GM12878 (cell line): ENCODE measurements at regions of chr14 and their contacts with region 1.

Region 1: DNA sequence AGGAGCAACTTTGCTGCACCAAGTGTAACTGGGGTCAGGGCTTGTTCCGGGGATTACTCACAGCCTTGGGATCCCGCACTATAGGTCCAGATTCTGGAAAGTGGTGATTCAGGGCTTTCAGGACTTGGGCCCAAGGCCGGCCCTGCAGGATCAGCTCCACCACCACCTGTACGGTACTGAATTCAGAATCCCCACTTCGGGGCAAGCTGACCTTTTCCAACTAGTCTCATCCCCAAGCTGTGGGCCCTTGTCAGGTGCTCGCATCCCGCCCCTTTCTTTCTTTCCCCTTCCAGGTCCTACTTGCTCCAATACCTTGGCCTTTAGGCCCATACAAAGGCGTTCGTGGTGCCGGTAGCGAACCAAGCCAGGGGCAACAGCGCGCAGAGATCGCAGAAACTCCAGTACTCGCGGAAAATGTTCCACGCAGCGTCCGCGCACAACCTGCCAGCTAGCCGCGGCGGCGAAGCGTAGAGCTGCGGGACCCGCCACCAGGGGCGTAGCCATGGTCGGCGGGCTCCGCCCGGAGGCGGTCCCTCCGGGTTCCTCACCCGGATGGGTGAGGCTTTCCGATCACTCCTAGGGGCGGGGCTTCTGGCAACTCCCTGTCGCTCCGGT is 487 bp downstream of the TINF2 start:
- DNase-seq: no peak
- ATAC-seq: peak; percentile 90
- H3K4me3 ChIP-seq: peak overlapping the region; percentile 80
- H3K27ac ChIP-seq: peak overlapping the region; percentile 99
- H3K4me1 ChIP-seq: peaks cover 16% of the 10 kb centered on the region
- H3K27me3 ChIP-seq: no peaks in the 10 kb centered on the region
- CTCF ChIP-seq: peak; percentile 17 to 52 (median 19); a peak in 3 of 6 replicates
- EP300 ChIP-seq: no peak
- POLR2A ChIP-seq: no peak
- RAD21 ChIP-seq: no peak

Region 2: GRCh38 chr14:24114536-24115450 is 127.1 kb before region 1 on chr14 and contains the starts of genes DCAF11 and NRL:
- CTCF ChIA-PET with region 1: interaction called, 3 read pairs
- POLR2A ChIA-PET with region 1: interaction called, 11 read pairs
- RAD21 ChIA-PET with region 1: interaction called, 9 read pairs
- SMC1A ChIA-PET with region 1: interaction called, 8 read pairs
- in situ Hi-C with region 1: no loop called
- intact Hi-C with region 1: no loop called
- DNase-seq: peak; percentile 99
- ATAC-seq: peak; percentile 92
- H3K4me3 ChIP-seq: peak within 1 kb of the TSS; percentile 96
- H3K27ac ChIP-seq: peak within 1 kb of the TSS; percentile 94
- H3K4me1 ChIP-seq: peaks cover 5% of the 10 kb centered on the region
- H3K27me3 ChIP-seq: no peaks in the 10 kb centered on the region
- CTCF ChIP-seq: no peak
- EP300 ChIP-seq: no peak
- POLR2A ChIP-seq: peak; percentile 91
- RAD21 ChIP-seq: no peak
- polyA plus RNA-seq, gene DCAF11: 13.4 to 16.4 TPM
- polyA plus RNA-seq, gene NRL: 0.11 to 0.13 TPM

Region 3: GRCh38 chr14:24215495-24216344 is 26.2 kb before region 1 on chr14 and contains the start of gene MDP1:
- CTCF ChIA-PET with region 1: interaction called, 54 read pairs
- POLR2A ChIA-PET with region 1: interaction called, 12 read pairs
- RAD21 ChIA-PET with region 1: interaction called, 23 read pairs
- SMC1A ChIA-PET with region 1: interaction called, 15 read pairs
- in situ Hi-C with region 1: no loop called
- intact Hi-C with region 1: loop called (anchors 1 kb)
- DNase-seq: peak; percentile 79
- ATAC-seq: peak; percentile 83
- H3K4me3 ChIP-seq: peak within 1 kb of the TSS; percentile 86
- H3K27ac ChIP-seq: peak within 1 kb of the TSS; percentile 82
- H3K4me1 ChIP-seq: peaks cover 15% of the 10 kb centered on the region
- H3K27me3 ChIP-seq: no peaks in the 10 kb centered on the region
- CTCF ChIP-seq: peak; percentile 82 to 94 (median 83); a peak in 5 of 6 replicates
- EP300 ChIP-seq: 0 out of 4 replicates have a peak, but pooled peaks have one; percentile 8 to 31
- POLR2A ChIP-seq: peak; percentile 93
- RAD21 ChIP-seq: peak; percentile 76
- polyA plus RNA-seq, gene MDP1: 39.2 to 45.8 TPM

Region 4: DNA sequence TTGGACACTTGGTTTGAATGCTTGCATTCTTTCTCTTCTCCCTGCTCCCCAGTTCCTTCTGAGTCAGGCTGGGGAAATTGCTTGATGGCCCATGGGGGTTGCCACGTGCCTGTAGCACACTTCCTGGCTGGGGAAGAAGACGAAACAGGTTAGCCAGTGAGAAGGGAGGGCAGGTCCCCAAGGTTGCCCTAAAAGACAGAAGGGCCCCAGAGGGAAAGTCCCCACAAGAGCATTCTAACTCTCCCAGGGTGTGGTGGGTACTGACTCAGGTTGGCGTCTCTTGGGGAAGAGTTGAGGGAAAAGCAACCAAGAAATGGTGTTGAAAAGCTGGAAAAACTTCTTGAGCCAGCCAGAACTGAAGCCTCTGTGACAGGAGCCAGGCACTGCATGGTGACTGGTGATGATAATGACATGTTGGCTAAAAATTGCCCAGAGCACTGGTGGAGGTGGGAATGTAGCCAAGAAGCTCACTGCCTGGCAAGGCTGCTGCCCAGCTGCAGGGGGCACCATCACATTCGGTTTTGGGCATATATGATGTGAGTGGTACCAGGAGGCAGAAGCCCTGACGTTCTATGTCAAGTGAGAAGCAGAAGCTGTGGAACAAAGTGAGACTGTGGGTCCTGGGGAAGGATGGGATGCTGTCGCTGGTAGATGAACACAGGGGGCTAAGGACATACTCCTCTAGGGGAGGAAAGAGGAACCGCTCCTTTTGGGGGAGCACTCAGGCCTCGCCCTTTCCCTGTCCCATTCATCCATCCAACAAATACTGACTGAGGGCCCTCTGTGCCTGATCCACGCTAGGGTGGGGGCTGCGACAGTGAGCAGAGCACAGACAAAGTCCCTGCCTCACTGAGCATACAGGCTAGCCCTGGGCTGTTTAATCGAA is 37.6 kb after region 1 on chr14:
- CTCF ChIA-PET with region 1: interaction called, 266 read pairs
- POLR2A ChIA-PET with region 1: interaction called, 171 read pairs
- RAD21 ChIA-PET with region 1: interaction called, 59 read pairs
- SMC1A ChIA-PET with region 1: interaction called, 141 read pairs
- in situ Hi-C with region 1: no loop called
- intact Hi-C with region 1: loop called (anchors 1 kb)
- DNase-seq: peak; percentile 64
- ATAC-seq: peak; percentile 88
- H3K4me3 ChIP-seq: no peak overlapping the region; the same call in 1 of the 2 replicates
- H3K27ac ChIP-seq: peak overlapping the region; percentile 53
- H3K4me1 ChIP-seq: peaks cover 43% of the 10 kb centered on the region
- H3K27me3 ChIP-seq: no peaks in the 10 kb centered on the region
- CTCF ChIP-seq: peak; percentile 44 to 47 (median 44); a peak in 5 of 6 replicates
- EP300 ChIP-seq: 0 out of 4 replicates have a peak, but pooled peaks of 1 of the 2 experiments have one; percentile 4
- POLR2A ChIP-seq: no peak
- RAD21 ChIP-seq: 0 out of 2 replicates have a peak, but pooled peaks have one; percentile 29

Region 5: DNA sequence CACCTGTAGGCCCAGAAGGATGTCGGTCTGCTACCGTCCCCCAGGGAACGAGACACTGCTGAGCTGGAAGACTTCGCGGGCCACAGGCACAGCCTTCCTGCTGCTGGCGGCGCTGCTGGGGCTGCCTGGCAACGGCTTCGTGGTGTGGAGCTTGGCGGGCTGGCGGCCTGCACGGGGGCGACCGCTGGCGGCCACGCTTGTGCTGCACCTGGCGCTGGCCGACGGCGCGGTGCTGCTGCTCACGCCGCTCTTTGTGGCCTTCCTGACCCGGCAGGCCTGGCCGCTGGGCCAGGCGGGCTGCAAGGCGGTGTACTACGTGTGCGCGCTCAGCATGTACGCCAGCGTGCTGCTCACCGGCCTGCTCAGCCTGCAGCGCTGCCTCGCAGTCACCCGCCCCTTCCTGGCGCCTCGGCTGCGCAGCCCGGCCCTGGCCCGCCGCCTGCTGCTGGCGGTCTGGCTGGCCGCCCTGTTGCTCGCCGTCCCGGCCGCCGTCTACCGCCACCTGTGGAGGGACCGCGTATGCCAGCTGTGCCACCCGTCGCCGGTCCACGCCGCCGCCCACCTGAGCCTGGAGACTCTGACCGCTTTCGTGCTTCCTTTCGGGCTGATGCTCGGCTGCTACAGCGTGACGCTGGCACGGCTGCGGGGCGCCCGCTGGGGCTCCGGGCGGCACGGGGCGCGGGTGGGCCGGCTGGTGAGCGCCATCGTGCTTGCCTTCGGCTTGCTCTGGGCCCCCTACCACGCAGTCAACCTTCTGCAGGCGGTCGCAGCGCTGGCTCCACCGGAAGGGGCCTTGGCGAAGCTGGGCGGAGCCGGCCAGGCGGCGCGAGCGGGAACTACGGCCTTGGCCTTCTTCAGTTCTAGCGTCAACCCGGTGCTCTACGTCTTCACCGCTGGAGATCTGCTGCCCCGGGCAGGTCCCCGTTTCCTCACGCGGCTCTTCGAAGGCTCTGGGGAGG is 69.0 kb after region 1 on chr14 and contains the start of gene LTB4R:
- CTCF ChIA-PET with region 1: interaction called, 90 read pairs
- POLR2A ChIA-PET with region 1: interaction called, 26 read pairs
- RAD21 ChIA-PET with region 1: interaction called, 52 read pairs
- SMC1A ChIA-PET with region 1: interaction called, 33 read pairs
- in situ Hi-C with region 1: no loop called
- intact Hi-C with region 1: no loop called
- DNase-seq: no peak
- ATAC-seq: peak; percentile 75
- H3K4me3 ChIP-seq: peak within 1 kb of the TSS; percentile 47
- H3K27ac ChIP-seq: peak within 1 kb of the TSS; percentile 45; the same call in 1 of the 2 replicates
- H3K4me1 ChIP-seq: peaks cover 37% of the 10 kb centered on the region
- H3K27me3 ChIP-seq: no peaks in the 10 kb centered on the region
- CTCF ChIP-seq: peak; percentile 10 to 40 (median 29); a peak in 3 of 6 replicates
- EP300 ChIP-seq: no peak
- POLR2A ChIP-seq: peak; percentile 54; the same call in 1 of the 2 replicates
- RAD21 ChIP-seq: no peak
- polyA plus RNA-seq, gene LTB4R: 1.2 to 1.7 TPM